ENCODE measurements at regions of chr6 and their contacts with region 1.

Region 1: DNA sequence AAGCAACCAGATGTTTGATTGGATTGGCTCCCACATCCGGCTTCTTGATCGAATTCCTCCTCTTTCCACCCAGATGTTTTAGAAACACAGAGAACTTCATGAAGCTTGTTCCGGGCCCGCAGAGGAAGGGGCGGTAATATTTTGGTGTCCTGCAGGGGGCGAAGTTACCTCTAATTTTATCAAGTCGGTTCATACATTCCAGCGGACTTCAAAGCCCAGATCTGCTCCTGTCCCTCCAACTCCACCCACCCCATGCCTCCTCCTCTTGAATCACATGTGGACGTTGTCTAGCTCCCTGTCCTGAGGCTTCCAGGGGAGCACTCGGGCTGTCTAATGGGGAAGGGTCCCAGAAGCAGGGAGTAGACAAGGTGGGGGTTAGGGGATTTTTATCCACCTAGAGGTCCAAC is 2.9 kb upstream of the BMP6 start:
- DNase-seq: peak; percentile 13 to 61 (median 48)
- ATAC-seq: peak; percentile 36
- H3K4me3 ChIP-seq: no peak overlapping the region
- H3K4me3 Mint-ChIP-seq: no peak overlapping the region
- H3K27ac ChIP-seq: no peak overlapping the region
- H3K27ac Mint-ChIP-seq: no peak overlapping the region
- H3K4me1 ChIP-seq: peaks cover 4% of the 10 kb centered on the region
- H3K4me1 Mint-ChIP-seq: peaks cover 12% of the 10 kb centered on the region
- H3K27me3 ChIP-seq: peaks cover 8 to 15% of the 10 kb centered on the region in 2 experiments
- H3K27me3 Mint-ChIP-seq: peaks cover 55% of the 10 kb centered on the region
- CTCF ChIP-seq: peak; percentile 57

Region 2: DNA sequence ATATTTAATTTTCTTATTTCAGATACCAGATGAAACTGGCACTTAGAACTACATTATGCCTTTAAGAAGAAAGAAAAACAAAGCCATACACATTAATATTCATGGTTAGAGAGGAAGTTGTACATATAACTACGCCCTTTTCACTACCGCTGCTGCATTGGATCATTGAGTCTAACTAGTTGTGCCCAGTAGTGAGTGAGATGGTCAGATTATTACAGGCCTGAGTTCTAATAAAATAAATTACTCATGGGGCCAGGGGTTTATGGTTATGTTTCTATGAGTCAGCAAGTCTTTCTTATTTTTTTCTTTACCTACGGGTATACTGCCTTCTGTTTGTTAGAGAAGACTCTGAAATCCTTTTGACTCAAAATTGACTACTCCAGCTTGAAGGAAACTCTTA is 322.0 kb before region 1 on chr6:
- CTCF ChIA-PET with region 1: no interaction called
- POLR2A ChIA-PET with region 1: no interaction called
- intact Hi-C with region 1: loop called in 1 of 2 experiments (anchors 5 kb)
- DNase-seq: no peak
- ATAC-seq: no peak
- H3K4me3 ChIP-seq: no peak overlapping the region
- H3K4me3 Mint-ChIP-seq: no peak overlapping the region
- H3K27ac ChIP-seq: no peak overlapping the region
- H3K27ac Mint-ChIP-seq: no peak overlapping the region
- H3K4me1 ChIP-seq: no peaks in the 10 kb centered on the region
- H3K4me1 Mint-ChIP-seq: no peaks in the 10 kb centered on the region
- H3K27me3 ChIP-seq: no peaks in the 10 kb centered on the region
- H3K27me3 Mint-ChIP-seq: no peaks in the 10 kb centered on the region
- CTCF ChIP-seq: no peak

Region 3: DNA sequence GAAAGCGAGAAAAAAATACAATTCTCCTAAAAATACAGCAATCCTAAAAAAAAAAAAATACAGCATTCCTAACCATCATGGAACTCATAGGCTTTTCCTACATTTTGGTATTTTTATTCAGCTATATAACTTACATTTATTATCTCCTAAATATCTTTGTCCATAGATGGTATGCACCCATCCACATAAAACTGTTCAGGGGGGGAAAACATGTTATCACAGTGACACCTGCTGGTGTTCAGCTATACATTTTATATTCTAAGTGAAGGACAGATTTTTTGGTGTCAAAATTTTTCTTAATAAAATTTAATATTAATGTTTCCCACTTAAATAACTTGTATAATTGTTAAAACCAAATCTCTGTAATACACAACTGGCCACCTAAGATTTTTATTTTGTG is 283.2 kb after region 1 on chr6:
- CTCF ChIA-PET with region 1: interaction called, 3 read pairs
- POLR2A ChIA-PET with region 1: no interaction called
- intact Hi-C with region 1: loop called (anchors 1 to 5 kb)
- DNase-seq: peak in 2 of 9 experiments; percentile 22 to 33
- ATAC-seq: no peak
- H3K4me3 ChIP-seq: no peak overlapping the region
- H3K4me3 Mint-ChIP-seq: no peak overlapping the region
- H3K27ac ChIP-seq: no peak overlapping the region
- H3K27ac Mint-ChIP-seq: no peak overlapping the region
- H3K4me1 ChIP-seq: no peaks in the 10 kb centered on the region
- H3K4me1 Mint-ChIP-seq: peaks cover 4% of the 10 kb centered on the region
- H3K27me3 ChIP-seq: no peaks in the 10 kb centered on the region
- H3K27me3 Mint-ChIP-seq: no peaks in the 10 kb centered on the region
- CTCF ChIP-seq: peak; percentile 33

Measured in CD8-positive, alpha-beta T cell (primary cell).